Naive thymus-derived CD4-positive, alpha-beta T cell (primary cell): ENCODE measurements at regions of chr9 and their contacts with region 1.

Region 1: DNA sequence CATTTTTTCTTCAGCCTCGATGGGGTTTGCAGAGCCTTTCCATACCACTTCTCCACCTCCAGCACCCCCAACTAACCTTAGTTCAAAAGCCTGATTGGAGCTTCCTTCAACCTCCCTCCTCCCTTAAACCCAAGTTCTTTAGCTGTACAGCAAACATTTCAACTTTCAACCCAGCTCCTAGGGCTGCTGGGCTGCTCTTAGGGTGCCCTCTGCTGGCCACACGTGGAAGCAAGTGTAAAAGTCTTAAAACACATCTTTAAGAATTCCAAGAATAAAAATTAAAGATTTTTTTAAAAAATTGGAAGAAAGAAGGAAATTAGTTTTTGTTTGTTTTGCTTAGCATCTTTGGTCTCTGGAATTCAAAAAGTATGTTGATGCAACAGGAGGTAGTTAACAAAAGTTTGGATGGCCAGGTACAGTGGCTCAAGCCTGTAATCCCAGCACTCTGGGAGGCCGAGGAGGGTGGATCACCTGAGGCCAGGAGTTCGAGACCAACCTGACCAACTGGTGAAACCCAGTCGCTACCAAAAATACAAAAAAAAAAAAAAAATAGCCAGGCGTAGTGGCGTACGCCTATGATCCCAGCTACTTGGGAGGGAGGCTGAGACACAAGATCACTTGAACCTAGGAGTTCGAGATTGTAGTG is 15.5 kb upstream of the HSD17B3 start:
- DNase-seq: peak in 8 of 9 donors; percentile 5 to 47 (median 39)
- ATAC-seq: peak; percentile 72
- H3K4me3 ChIP-seq: no peak overlapping the region
- H3K4me3 Mint-ChIP-seq: peak overlapping the region in 1 of 10 donors; percentile 38
- H3K27ac ChIP-seq: no peak overlapping the region
- H3K27ac Mint-ChIP-seq: peak overlapping the region in 2 of 9 donors; percentile 43 to 86
- H3K4me1 ChIP-seq: no peaks in the 10 kb centered on the region
- H3K4me1 Mint-ChIP-seq: peaks cover 0 to 3% (median 0%) of the 10 kb centered on the region in 7 donors
- H3K27me3 ChIP-seq: no peaks in the 10 kb centered on the region
- H3K27me3 Mint-ChIP-seq: peaks cover 0 to 10% (median 6%) of the 10 kb centered on the region in 5 donors

Region 2: GRCh38 chr9:94681508-94681907 is 1636.0 kb before region 1 on chr9:
- CTCF ChIA-PET with region 1: no interaction called
- POLR2A ChIA-PET with region 1: no interaction called
- intact Hi-C with region 1: loop called (anchors 1 to 5 kb)
- DNase-seq: peak; percentile 20 to 63 (median 52)
- ATAC-seq: peak; percentile 94
- H3K4me3 ChIP-seq: no peak overlapping the region
- H3K4me3 Mint-ChIP-seq: no peak overlapping the region
- H3K27ac ChIP-seq: no peak overlapping the region
- H3K27ac Mint-ChIP-seq: no peak overlapping the region
- H3K4me1 ChIP-seq: no peaks in the 10 kb centered on the region
- H3K4me1 Mint-ChIP-seq: no peaks in the 10 kb centered on the region
- H3K27me3 ChIP-seq: no peaks in the 10 kb centered on the region
- H3K27me3 Mint-ChIP-seq: peaks cover 0 to 47% (median 16%) of the 10 kb centered on the region in 5 donors

Region 3: DNA sequence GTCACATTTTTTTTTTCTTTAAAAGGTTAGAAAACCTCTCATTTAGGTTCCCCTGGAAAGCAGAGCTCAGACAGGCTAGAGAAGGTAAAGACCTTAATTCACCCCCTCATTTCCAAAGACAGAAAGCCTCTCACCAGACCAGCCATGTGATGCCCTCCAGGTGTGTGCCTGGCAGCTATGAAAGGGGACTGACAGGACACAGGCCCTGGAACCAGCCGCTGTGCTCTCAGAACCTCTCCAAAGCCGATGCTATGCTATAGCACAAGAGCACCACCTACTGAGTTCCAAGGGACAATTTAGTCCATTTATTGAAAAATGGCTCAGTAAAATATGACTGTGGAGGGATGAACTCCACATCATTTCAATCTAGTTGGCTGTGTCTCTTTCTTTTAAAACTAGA is 1048.8 kb before region 1 on chr9:
- CTCF ChIA-PET with region 1: no interaction called
- POLR2A ChIA-PET with region 1: no interaction called
- intact Hi-C with region 1: loop called in 1 of 2 experiments (anchors 10 kb)
- DNase-seq: no peak
- ATAC-seq: no peak
- H3K4me3 ChIP-seq: no peak overlapping the region
- H3K4me3 Mint-ChIP-seq: no peak overlapping the region
- H3K27ac ChIP-seq: no peak overlapping the region
- H3K27ac Mint-ChIP-seq: peak overlapping the region in 2 of 9 donors; percentile 12 to 32
- H3K4me1 ChIP-seq: peaks cover 0 to 4% of the 10 kb centered on the region in 2 donors
- H3K4me1 Mint-ChIP-seq: peaks cover 9 to 49% (median 27%) of the 10 kb centered on the region in 7 donors
- H3K27me3 ChIP-seq: no peaks in the 10 kb centered on the region
- H3K27me3 Mint-ChIP-seq: no peaks in the 10 kb centered on the region

Region 4: DNA sequence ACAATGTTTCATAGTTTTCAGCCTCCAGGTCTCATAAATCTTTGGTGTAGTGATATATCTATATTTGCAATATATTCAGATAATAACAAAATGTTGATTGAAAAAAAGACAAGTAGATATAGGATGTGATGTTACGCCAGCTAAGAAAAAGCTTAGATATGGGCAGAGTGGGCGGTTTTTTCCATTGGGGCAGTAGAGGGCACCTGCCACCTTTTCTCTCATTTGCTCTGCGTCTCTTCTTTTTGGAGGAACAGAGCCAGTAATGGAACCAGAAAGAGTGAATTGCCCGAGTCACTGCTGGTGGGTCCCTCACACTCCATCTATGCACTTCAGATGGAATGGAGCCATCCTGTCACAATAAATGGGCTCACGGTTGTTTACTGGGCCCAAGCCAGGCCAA is 937.8 kb before region 1 on chr9:
- CTCF ChIA-PET with region 1: no interaction called
- POLR2A ChIA-PET with region 1: no interaction called
- intact Hi-C with region 1: loop called in 1 of 2 experiments (anchors 2 kb)
- DNase-seq: peak in 7 of 9 donors; percentile 10 to 50 (median 42)
- ATAC-seq: no peak
- H3K4me3 ChIP-seq: no peak overlapping the region
- H3K4me3 Mint-ChIP-seq: no peak overlapping the region
- H3K27ac ChIP-seq: no peak overlapping the region
- H3K27ac Mint-ChIP-seq: no peak overlapping the region
- H3K4me1 ChIP-seq: no peaks in the 10 kb centered on the region
- H3K4me1 Mint-ChIP-seq: peaks cover 0 to 11% (median 0%) of the 10 kb centered on the region in 7 donors
- H3K27me3 ChIP-seq: no peaks in the 10 kb centered on the region
- H3K27me3 Mint-ChIP-seq: peaks cover 25 to 42% (median 31%) of the 10 kb centered on the region in 5 donors

Region 5: DNA sequence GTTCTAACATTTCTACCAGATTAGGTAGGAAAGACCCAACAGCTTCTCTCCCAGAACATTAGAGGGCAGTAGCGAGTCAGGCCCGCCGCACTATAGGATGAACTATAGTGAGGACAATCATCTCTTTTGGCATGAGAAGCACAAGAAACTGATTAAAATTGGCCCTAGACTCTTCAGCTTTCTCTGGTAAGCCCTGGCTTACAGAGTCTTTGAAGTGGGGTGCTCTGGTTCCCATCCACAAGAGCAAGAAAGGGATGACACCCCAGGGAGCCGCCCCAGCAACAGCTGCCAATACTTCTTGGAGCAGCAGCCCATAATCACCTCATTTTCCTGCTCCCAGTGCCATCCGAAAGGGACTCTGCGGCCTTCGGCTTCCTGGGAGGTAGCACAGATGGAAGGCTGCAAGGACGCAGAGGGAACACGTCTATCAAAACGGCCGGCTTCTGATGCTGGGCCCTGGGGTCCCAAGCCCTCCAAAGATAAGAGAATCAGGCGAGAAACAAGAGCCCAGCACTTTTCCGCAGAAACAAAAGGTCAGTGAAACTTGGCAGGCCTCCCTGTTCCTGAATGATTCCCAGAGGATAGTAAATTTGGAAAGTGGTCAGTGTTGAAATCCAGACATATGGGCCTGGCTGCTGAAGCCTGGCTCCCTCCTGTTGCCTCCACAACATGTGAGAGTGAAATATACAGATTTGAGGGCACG is 84.8 kb before region 1 on chr9:
- CTCF ChIA-PET with region 1: interaction called, 5 read pairs
- POLR2A ChIA-PET with region 1: no interaction called
- intact Hi-C with region 1: loop called (anchors 1 kb)
- DNase-seq: peak in 5 of 9 donors; percentile 13 to 42 (median 28)
- ATAC-seq: peak; percentile 69
- H3K4me3 ChIP-seq: no peak overlapping the region
- H3K4me3 Mint-ChIP-seq: no peak overlapping the region
- H3K27ac ChIP-seq: no peak overlapping the region
- H3K27ac Mint-ChIP-seq: peak overlapping the region in 1 of 9 donors; percentile 16
- H3K4me1 ChIP-seq: no peaks in the 10 kb centered on the region
- H3K4me1 Mint-ChIP-seq: peaks cover 0 to 3% (median 0%) of the 10 kb centered on the region in 7 donors
- H3K27me3 ChIP-seq: no peaks in the 10 kb centered on the region
- H3K27me3 Mint-ChIP-seq: peaks cover 15 to 51% (median 26%) of the 10 kb centered on the region in 5 donors

Region 6: GRCh38 chr9:96241391-96241809 is 76.1 kb before region 1 on chr9:
- CTCF ChIA-PET with region 1: interaction called, 3 read pairs
- POLR2A ChIA-PET with region 1: no interaction called
- intact Hi-C with region 1: loop called in 1 of 2 experiments (anchors 2 kb)
- DNase-seq: peak in 1 of 9 donors; percentile 65
- ATAC-seq: peak; percentile 46
- H3K4me3 ChIP-seq: no peak overlapping the region
- H3K4me3 Mint-ChIP-seq: peak overlapping the region in 1 of 10 donors; percentile 17
- H3K27ac ChIP-seq: no peak overlapping the region
- H3K27ac Mint-ChIP-seq: peak overlapping the region in 1 of 9 donors; percentile 49
- H3K4me1 ChIP-seq: peaks cover 0 to 15% of the 10 kb centered on the region in 2 donors
- H3K4me1 Mint-ChIP-seq: peaks cover 0 to 16% (median 4%) of the 10 kb centered on the region in 7 donors
- H3K27me3 ChIP-seq: peaks cover 0 to 13% of the 10 kb centered on the region in 2 donors
- H3K27me3 Mint-ChIP-seq: peaks cover 17 to 72% (median 27%) of the 10 kb centered on the region in 5 donors